ENCODE measurements at regions of chr17 and their contacts with region 1.

Region 1: DNA sequence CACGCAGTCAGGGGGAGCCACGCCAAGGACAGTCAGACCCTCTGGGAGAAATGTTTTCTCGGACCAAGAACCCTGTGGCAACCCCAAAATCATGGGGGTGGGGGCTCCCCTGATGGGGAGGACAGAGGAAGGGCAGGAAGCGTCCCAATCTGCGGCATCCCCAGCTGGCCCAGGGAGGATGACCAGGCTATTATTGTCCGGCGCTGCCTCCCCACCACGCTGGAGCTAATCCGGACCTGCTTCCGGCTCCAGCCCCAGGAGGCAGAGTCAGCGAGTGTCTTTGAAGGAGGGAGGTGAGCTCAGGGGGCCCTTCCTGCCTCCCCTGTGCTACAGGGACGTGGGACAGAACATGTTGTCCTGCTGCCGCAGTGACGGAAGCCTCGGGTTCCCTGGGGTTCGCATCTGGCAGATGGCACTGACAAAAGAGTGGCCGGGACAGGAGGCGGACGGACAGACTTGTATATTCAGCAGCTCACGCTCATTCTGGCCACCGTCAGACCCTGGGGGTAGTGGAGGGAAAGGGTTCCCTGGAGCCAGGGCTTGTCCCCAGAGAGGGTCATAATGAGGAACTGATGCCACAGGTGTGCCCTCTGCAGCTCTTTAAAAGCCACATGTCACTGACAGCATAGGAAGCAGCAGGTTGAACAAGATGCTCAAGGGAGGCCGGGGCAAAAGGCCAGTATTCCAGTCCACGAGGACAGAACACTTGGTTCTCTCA is 54.3 kb upstream of the CDC42EP4 start:
- DNase-seq: peak; percentile 62
- ATAC-seq: peak; percentile 35 to 46

Region 2: DNA sequence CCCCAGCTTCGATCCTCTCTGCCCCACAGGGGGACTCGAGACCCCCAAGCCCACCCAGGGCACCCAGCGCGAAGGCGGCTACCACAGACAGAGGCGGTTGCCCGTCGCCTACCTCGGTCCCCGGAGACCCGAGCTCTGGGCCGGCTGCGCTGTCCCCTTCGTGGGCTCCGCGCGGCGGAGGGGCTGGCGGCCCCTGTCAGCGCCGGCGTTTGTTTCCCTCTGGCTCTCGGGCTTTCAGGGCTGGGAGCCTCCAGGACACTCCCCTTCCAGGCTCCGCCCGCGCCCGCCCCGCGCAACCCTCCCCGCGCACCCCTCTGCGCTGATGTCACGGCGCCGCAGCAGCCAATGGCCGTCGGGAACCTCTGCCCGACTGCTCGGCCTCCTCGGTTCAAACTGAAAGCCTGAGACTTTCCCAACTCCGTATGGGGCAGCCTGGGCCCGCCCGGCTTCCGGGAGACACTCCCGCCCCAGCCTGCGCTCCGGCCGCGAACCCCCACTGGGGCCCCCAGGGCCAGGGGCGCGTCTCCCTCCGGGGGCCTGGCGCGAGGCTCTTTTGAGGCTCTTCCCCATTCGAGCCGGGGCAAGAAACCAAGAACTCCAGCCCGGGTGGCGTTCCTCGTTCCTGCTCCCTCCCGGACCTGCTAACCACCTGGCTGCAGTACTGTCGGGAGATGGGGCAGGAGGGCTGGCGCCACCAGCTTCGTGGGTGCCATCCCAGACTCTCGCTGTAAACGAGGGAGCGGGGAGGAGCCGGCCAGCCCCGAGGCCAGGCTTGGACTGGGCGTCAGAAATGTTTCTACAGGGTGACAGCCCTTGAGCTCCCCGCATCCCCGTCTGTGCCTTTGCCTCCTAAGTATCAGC is 54.1 kb before region 1 on chr17 and contains the start of gene CDC42EP4:
- intact Hi-C with region 1: loop called in 1 of 2 experiments (anchors 5 kb)
- DNase-seq: peak; percentile 96
- ATAC-seq: peak; percentile 92 to 93
- total RNA-seq, gene CDC42EP4: 44.9 to 80.5 TPM

Measured in left cardiac atrium (tissue), 4 donors.